Naive thymus-derived CD4-positive, alpha-beta T cell (primary cell): ENCODE measurements at regions of chr10 and their contacts with region 1.

Region 1: DNA sequence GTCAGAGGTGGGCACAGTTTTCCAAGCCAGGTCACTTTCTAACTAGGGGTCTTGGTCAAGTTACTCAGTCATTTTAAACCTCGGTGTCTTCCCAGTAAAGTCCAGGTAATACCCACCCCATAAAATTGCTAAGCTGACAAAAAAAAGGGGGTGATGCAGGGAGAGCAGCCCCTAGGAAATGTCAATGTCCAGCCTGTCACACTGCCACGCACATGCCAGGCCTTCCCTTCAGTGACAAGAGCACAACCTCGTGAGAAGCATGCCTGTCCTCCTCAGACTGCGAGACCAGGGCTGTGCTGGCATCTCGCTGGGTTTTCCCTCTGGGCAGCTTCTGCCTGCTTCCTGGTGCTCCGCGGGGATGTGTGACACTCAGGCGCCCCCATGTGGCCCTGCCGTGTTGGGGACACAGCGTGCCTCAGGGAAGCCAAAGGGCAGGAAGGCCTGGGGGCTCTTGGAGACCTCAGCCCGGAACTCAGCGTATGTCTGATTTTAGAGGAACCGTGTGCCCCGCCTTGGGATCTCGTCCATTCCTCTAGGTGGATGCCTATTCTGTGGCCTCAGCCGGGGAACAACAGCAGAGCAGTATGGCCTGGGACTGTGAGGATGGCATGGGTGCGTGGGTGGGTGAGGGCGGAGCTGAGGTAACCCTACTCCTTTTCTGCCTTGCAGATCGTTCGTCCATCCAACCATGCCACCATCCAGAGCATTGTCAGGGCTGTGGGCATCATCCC is 10.2 kb upstream of the GDF2 start:
- DNase-seq: peak; percentile 70 to 86 (median 79)
- ATAC-seq: peak; percentile 90
- H3K4me3 ChIP-seq: peak overlapping the region; percentile 41
- H3K4me3 Mint-ChIP-seq: peak overlapping the region; percentile 43 to 82 (median 70)
- H3K27ac ChIP-seq: peak overlapping the region; percentile 61
- H3K27ac Mint-ChIP-seq: peak overlapping the region; percentile 71 to 94 (median 88)
- H3K4me1 ChIP-seq: peaks cover 14 to 31% of the 10 kb centered on the region in 2 donors
- H3K4me1 Mint-ChIP-seq: peaks cover 11 to 44% (median 38%) of the 10 kb centered on the region in 7 donors
- H3K27me3 ChIP-seq: no peaks in the 10 kb centered on the region
- H3K27me3 Mint-ChIP-seq: peaks cover 0 to under 1% (median 0%) of the 10 kb centered on the region in 5 donors

Region 2: DNA sequence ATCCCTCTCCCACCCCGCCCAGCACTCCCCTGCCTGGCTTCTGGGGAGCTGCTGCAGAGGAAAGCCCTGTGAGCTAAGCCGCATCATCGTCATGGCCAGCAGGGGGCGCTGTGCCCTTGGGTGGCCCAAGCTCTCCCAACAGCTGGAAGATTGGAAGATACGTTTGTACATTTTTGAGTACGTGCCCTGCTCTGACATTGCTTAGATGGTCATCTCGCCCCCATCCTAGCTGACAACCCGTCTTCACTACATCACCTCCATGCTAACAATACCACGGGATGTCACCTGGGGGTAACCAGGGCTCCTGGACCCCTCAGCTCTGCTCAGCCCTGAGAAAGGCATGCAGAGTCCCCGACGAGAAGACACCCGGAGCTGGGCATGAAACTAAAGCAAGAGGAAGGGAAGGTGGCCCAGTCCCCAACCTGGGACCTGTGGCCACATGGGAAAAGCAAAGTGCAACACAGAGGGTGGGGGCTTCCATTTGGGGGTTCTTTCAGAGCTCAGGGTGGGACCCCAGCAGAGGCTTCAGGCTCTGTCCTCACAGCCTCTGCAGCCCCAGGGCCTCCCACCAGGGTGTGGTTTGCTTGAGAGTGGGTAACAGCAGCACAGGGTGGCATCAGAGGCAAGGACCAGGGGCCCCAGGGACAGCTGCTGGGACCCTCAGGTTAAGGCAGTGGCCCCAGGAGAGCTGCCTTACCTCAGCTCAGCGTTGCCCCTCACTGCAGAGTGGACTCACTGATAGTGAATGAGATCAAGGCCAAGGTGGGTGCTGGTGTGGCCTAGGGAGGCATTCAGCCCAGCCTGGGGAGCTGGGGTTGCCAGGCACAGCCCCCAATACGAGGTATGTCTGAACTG is 264.2 kb before region 1 on chr10:
- CTCF ChIA-PET with region 1: interaction called, 155 read pairs
- POLR2A ChIA-PET with region 1: interaction called, 31 read pairs
- intact Hi-C with region 1: loop called (anchors 1 kb)
- DNase-seq: peak; percentile 44 to 80 (median 67)
- ATAC-seq: peak; percentile 74
- H3K4me3 ChIP-seq: no peak overlapping the region
- H3K4me3 Mint-ChIP-seq: peak overlapping the region in 4 of 10 donors; percentile 5 to 59 (median 37)
- H3K27ac ChIP-seq: no peak overlapping the region
- H3K27ac Mint-ChIP-seq: peak overlapping the region in 8 of 9 donors; percentile 20 to 90 (median 54)
- H3K4me1 ChIP-seq: peaks cover 6 to 14% of the 10 kb centered on the region in 2 donors
- H3K4me1 Mint-ChIP-seq: peaks cover 7 to 24% (median 19%) of the 10 kb centered on the region in 7 donors
- H3K27me3 ChIP-seq: no peaks in the 10 kb centered on the region
- H3K27me3 Mint-ChIP-seq: no peaks in the 10 kb centered on the region

Region 3: GRCh38 chr10:47181052-47181849 is 130.8 kb before region 1 on chr10:
- CTCF ChIA-PET with region 1: interaction called, 3 read pairs
- POLR2A ChIA-PET with region 1: no interaction called
- intact Hi-C with region 1: loop called in 1 of 2 experiments (anchors 5 kb)
- DNase-seq: peak in 2 of 9 donors; percentile 7 to 15
- ATAC-seq: no peak
- H3K4me3 ChIP-seq: no peak overlapping the region
- H3K4me3 Mint-ChIP-seq: no peak overlapping the region
- H3K27ac ChIP-seq: no peak overlapping the region
- H3K27ac Mint-ChIP-seq: no peak overlapping the region
- H3K4me1 ChIP-seq: no peaks in the 10 kb centered on the region
- H3K4me1 Mint-ChIP-seq: peaks cover 0 to 13% (median 4%) of the 10 kb centered on the region in 7 donors
- H3K27me3 ChIP-seq: no peaks in the 10 kb centered on the region
- H3K27me3 Mint-ChIP-seq: no peaks in the 10 kb centered on the region

Region 4: GRCh38 chr10:47261121-47261520 is 51.0 kb before region 1 on chr10:
- CTCF ChIA-PET with region 1: interaction called, 18 read pairs
- POLR2A ChIA-PET with region 1: interaction called, 13 read pairs
- intact Hi-C with region 1: loop called (anchors 1 to 2 kb)
- DNase-seq: peak in 8 of 9 donors; percentile 33 to 64 (median 57)
- ATAC-seq: peak; percentile 68
- H3K4me3 ChIP-seq: no peak overlapping the region
- H3K4me3 Mint-ChIP-seq: peak overlapping the region; percentile 3 to 75 (median 64)
- H3K27ac ChIP-seq: peak overlapping the region; percentile 70
- H3K27ac Mint-ChIP-seq: peak overlapping the region; percentile 92 to 100 (median 95)
- H3K4me1 ChIP-seq: peaks cover 48 to 81% of the 10 kb centered on the region in 2 donors
- H3K4me1 Mint-ChIP-seq: peaks cover 41 to 97% (median 93%) of the 10 kb centered on the region in 7 donors
- H3K27me3 ChIP-seq: no peaks in the 10 kb centered on the region
- H3K27me3 Mint-ChIP-seq: no peaks in the 10 kb centered on the region

Region 5: DNA sequence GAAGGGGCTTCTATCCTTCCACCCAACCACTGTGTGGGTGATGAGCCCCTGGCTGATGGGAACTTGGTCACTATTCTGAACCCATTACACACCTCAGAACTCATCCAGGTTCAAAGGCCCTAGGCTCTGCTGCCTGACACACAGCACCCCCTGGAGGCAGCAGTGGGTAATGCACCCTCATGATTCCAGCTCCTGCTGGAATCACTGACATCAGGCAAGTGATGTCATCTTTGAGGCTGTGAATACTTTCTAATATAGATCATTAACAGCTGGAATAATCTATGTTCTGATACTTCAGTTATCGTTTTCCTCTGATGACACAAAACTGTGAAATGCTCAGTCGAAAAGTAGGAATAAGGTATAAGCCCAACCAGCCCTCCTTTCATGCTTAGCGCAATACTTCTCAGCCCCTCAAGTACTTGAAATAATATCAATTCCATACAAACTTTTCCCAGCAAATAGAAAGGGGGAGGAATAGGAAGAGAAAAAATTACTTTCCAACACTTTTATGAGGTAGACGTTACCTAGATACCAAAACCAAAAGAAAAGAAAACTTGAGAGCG is 28.6 kb after region 1 on chr10:
- CTCF ChIA-PET with region 1: interaction called, 6 read pairs
- POLR2A ChIA-PET with region 1: no interaction called
- intact Hi-C with region 1: loop called in 1 of 2 experiments (anchors 1 kb)
- DNase-seq: peak; percentile 45 to 76 (median 64)
- ATAC-seq: peak; percentile 88
- H3K4me3 ChIP-seq: no peak overlapping the region
- H3K4me3 Mint-ChIP-seq: no peak overlapping the region
- H3K27ac ChIP-seq: no peak overlapping the region
- H3K27ac Mint-ChIP-seq: no peak overlapping the region
- H3K4me1 ChIP-seq: no peaks in the 10 kb centered on the region
- H3K4me1 Mint-ChIP-seq: peaks cover 0 to 5% (median 0%) of the 10 kb centered on the region in 7 donors
- H3K27me3 ChIP-seq: no peaks in the 10 kb centered on the region
- H3K27me3 Mint-ChIP-seq: peaks cover 4 to 20% (median 11%) of the 10 kb centered on the region in 5 donors

Region 6: DNA sequence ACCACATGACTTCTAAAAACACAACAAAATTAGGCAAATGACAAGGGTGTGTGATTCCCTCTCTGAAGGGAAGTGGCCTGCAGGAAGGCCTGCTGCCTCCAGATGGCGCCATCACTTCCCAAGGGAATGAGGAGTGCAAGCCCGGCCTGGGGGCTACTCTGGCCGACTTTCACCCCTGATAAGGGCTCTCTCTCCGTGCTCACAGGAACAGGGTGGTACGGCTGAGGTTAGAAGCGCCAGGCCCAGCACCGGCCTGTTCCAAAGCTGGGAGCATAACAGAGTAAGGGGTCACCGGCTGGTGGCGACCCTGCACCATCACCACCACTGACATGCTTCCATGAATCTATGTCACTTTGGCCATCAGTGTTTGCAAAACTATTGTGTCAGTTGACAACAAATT is 49.2 kb after region 1 on chr10:
- CTCF ChIA-PET with region 1: no interaction called
- POLR2A ChIA-PET with region 1: no interaction called
- intact Hi-C with region 1: no loop called
- DNase-seq: peak in 1 of 9 donors; percentile 28
- ATAC-seq: no peak
- H3K4me3 ChIP-seq: no peak overlapping the region
- H3K4me3 Mint-ChIP-seq: no peak overlapping the region
- H3K27ac ChIP-seq: no peak overlapping the region
- H3K27ac Mint-ChIP-seq: no peak overlapping the region
- H3K4me1 ChIP-seq: no peaks in the 10 kb centered on the region
- H3K4me1 Mint-ChIP-seq: no peaks in the 10 kb centered on the region
- H3K27me3 ChIP-seq: no peaks in the 10 kb centered on the region
- H3K27me3 Mint-ChIP-seq: peaks cover 0 to 2% (median 0%) of the 10 kb centered on the region in 5 donors